MCF 10A (cell line): ENCODE measurements at regions of chr17 and their contacts with region 1.

Region 1: GRCh38 chr17:47978324-47978723 is 7.4 kb downstream of the CDK5RAP3 start:
- DNase-seq: peak; percentile 47
- H3K4me3 Mint-ChIP-seq: no peak overlapping the region
- H3K27ac Mint-ChIP-seq: no peak overlapping the region
- H3K4me1 Mint-ChIP-seq: no peaks in the 10 kb centered on the region
- H3K27me3 Mint-ChIP-seq: no peaks in the 10 kb centered on the region
- CTCF ChIP-seq: peak; percentile 50

Region 2: DNA sequence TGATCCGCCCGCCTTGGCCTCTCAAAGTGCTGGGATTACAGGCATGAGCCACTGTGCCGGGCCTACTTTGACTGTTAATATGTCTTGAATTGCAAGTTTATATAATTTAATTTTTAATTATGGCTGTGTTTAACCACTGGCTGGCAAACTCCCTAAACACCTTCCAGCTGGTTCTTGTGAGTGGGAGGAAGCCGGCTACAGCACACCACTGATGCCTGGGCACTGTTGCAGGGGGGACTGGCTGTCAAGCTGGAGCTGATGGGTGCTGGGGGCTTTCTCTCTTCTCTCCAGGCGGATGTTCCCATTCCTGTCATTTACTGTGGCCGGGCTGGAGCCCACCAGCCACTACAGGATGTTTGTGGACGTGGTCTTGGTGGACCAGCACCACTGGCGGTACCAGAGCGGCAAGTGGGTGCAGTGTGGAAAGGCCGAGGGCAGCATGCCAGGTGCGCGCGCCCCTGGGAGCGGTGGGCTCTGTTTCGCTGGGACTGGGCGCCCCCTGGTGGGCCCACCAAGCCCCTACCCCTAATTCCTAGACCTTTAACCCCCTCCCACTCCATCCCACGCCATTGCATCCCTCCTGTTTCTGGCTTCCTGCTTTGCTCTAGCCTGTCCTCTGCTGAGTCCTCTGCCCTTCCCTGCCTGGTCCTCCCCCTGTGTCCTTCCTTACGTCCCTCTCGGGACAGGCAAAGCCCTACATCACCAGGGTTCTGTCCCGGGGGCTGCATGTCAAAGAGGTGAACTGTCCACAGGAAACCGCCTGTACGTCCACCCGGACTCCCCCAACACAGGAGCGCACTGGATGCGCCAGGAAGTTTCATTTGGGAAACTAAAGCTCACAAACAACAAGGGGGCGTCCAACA is 235.8 kb before region 1 on chr17:
- CTCF ChIA-PET with region 1: no interaction called
- POLR2A ChIA-PET with region 1: no interaction called
- intact Hi-C with region 1: no loop called
- DNase-seq: no peak
- H3K4me3 Mint-ChIP-seq: no peak overlapping the region
- H3K27ac Mint-ChIP-seq: no peak overlapping the region
- H3K4me1 Mint-ChIP-seq: no peaks in the 10 kb centered on the region
- H3K27me3 Mint-ChIP-seq: peaks cover 66% of the 10 kb centered on the region
- CTCF ChIP-seq: peak; percentile 28

Region 3: DNA sequence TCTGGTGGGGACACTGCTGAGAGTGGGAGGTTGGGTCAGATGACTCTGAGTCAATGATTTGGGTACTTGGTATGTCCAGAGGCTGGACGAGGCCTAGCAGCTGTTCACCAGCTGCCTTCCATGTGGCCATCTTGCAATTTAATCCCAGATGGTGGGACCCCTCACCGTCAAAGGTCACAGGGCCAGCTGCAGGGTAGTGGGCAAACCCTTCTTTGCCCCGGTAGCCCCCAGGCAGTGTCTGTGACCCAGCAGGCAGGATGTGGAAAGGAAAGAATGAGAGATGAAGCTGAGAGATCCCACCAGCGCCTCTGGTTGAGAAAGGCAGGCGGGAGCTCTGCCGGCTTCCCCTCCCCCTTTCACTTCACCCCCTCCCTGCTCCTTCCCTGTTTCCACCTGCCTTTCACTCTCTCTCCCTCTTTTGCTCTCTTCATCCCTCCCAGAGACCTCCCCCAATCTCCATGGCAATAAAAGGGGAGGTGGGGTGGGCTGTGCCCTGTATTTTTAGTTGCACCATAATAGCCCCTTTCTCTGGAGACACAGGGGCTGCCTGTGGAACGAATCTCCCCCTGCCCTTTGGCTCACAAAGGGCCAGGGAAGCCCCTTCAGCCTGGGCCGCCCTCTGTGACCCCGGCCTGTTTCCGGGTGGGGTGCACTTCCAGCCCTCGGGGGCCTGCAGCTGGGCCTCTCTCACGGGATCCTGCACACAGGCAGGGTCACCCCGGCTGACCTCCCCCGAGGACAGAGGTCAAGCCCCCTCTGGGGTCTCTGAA is 12.8 kb after region 1 on chr17:
- CTCF ChIA-PET with region 1: interaction called, 19 read pairs
- POLR2A ChIA-PET with region 1: interaction called, 3 read pairs
- intact Hi-C with region 1: no loop called
- DNase-seq: no peak
- H3K4me3 Mint-ChIP-seq: no peak overlapping the region
- H3K27ac Mint-ChIP-seq: no peak overlapping the region
- H3K4me1 Mint-ChIP-seq: no peaks in the 10 kb centered on the region
- H3K27me3 Mint-ChIP-seq: no peaks in the 10 kb centered on the region
- CTCF ChIP-seq: no peak

Region 4: GRCh38 chr17:47999582-47999981 is 21.3 kb after region 1 on chr17:
- CTCF ChIA-PET with region 1: interaction called, 19 read pairs
- POLR2A ChIA-PET with region 1: interaction called, 3 read pairs
- intact Hi-C with region 1: no loop called
- DNase-seq: no peak
- H3K4me3 Mint-ChIP-seq: no peak overlapping the region
- H3K27ac Mint-ChIP-seq: no peak overlapping the region
- H3K4me1 Mint-ChIP-seq: peaks cover 8% of the 10 kb centered on the region
- H3K27me3 Mint-ChIP-seq: no peaks in the 10 kb centered on the region
- CTCF ChIP-seq: no peak

Region 5: DNA sequence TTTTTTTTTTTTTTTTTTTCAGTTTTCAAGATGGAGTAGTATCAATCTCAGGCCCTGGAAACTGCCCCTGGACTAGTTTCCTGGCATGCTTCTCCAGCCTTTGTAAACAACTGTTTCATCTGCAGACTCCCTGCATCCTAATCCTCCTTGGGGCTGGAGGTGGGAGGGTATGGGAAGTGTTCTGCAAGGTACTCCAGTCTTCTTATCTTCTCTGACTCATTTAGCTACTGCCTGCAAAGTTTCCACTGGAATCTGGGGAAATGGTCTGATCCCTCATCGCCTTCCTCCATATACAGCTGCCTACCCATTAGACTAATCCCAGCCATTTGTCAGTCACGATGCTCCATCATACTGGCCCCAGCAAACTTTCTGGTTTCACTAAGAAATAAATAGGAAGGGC is 37.8 kb after region 1 on chr17:
- CTCF ChIA-PET with region 1: interaction called, 41 read pairs
- POLR2A ChIA-PET with region 1: interaction called, 5 read pairs
- intact Hi-C with region 1: loop called (anchors 1 kb)
- DNase-seq: no peak
- H3K4me3 Mint-ChIP-seq: no peak overlapping the region
- H3K27ac Mint-ChIP-seq: peak overlapping the region; percentile 55
- H3K4me1 Mint-ChIP-seq: peaks cover 5% of the 10 kb centered on the region
- H3K27me3 Mint-ChIP-seq: no peaks in the 10 kb centered on the region
- CTCF ChIP-seq: no peak